Ascending aorta (tissue), 2 donors: ENCODE measurements at regions of chr1 and their contacts with region 1.

Region 1: GRCh38 chr1:117605774-117606648 is at the start of gene TENT5C:
- DNase-seq: peak; percentile 94 to 99
- H3K4me3 ChIP-seq: peak within 1 kb of the TSS; percentile 85 to 88
- H3K27ac ChIP-seq: peak within 1 kb of the TSS; percentile 83 to 90
- H3K4me1 ChIP-seq: peaks cover 0 to 9% of the 10 kb centered on the region in 2 donors
- H3K27me3 ChIP-seq: no peaks in the 10 kb centered on the region
- CTCF ChIP-seq: no peak
- total RNA-seq, gene TENT5C: 0.32 TPM

Region 2: GRCh38 chr1:116372587-116373444 is 1233.2 kb before region 1 on chr1 and contains the start of gene ATP1A1:
- intact Hi-C with region 1: loop called (anchors 5 kb)
- DNase-seq: peak; percentile 94 to 98
- H3K4me3 ChIP-seq: peak within 1 kb of the TSS; percentile 78 to 81
- H3K27ac ChIP-seq: peak within 1 kb of the TSS; percentile 95 to 96
- H3K4me1 ChIP-seq: peaks cover 17 to 36% of the 10 kb centered on the region in 2 donors
- H3K27me3 ChIP-seq: no peaks in the 10 kb centered on the region
- CTCF ChIP-seq: no peak
- total RNA-seq, gene ATP1A1: 255 TPM

Region 3: DNA sequence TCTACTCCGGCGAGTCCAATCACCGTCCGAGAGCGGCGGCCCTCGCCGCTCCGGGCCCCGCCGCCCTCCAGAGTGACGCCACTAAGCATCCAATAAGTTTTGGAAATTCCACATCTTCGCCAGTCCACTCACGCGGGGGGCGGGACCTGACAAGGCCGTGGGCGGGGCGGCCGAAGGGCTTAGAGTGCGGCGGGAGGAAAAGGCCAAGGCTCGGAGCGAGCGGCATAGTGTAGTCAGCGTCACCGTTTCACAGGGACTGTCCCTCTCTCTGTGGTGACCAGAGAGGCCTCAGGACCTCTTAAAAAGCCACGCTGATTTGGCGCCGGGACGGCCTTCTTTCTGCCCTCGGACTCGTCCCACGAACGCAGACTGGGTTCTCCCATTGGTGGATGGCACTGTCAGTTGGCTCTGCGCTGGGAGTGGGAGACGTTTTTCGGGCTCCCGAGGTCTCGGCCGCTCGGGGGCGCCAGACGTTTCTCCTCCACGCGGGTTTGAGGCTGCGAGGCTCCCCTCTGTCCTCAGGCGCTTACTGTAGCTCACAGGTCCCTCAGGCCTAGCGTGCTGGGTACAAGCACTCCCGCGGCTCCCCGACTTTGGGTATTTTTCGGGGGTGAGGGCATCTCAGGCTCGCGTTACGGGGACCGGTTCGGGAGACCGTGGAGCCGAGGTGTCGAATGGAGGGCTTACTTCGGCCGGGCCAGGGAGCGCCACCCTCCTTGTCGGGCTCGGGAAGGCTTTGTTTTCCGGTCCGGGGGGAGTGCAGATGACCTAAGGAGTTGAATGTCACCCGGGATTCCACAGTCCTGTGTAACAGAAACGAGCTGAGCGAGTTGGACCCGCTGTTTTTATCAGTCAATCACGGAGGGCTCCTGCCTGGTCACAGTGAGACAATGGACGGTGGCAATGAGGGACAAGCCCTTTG is 484.0 kb before region 1 on chr1:
- intact Hi-C with region 1: loop called (anchors 10 kb)
- DNase-seq: peak; percentile 86 to 99
- H3K4me3 ChIP-seq: peak overlapping the region; percentile 73 to 90
- H3K27ac ChIP-seq: peak overlapping the region; percentile 86 to 88
- H3K4me1 ChIP-seq: peaks cover 3 to 5% of the 10 kb centered on the region in 2 donors
- H3K27me3 ChIP-seq: no peaks in the 10 kb centered on the region
- CTCF ChIP-seq: peak; percentile 66 to 86 (median 80)

Region 4: DNA sequence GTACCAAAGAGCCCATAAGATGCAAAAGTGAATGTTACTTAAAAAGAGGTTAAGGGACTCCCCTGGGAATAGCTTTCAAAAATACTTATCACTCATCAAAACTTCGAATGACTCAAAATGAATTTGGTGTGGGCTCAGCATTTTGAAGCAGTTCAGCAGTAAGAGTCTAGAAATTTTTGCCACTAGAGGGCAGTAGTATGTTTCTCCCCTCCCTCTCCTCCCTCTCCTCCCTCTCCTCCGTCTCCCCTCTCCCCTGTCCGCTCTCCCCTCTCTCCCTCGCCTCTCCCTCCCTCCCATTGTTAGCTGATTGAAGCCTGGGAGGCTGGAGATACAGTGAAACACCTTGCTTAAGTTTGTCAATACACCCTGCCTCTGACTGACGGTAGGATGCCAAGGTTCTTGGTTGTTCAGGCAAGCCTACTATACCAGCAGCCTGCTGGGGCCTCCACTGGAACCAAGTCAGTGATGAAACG is 71.0 kb before region 1 on chr1:
- intact Hi-C with region 1: loop called (anchors 5 kb)
- DNase-seq: no peak
- H3K4me3 ChIP-seq: no peak overlapping the region
- H3K27ac ChIP-seq: no peak overlapping the region
- H3K4me1 ChIP-seq: no peaks in the 10 kb centered on the region
- H3K27me3 ChIP-seq: no peaks in the 10 kb centered on the region
- CTCF ChIP-seq: peak; percentile 55 to 76 (median 57)

Region 5: GRCh38 chr1:117695796-117696490 is 89.9 kb after region 1 on chr1:
- intact Hi-C with region 1: loop called (anchors 1 kb)
- DNase-seq: peak in 1 of 2 donors; percentile 88
- H3K4me3 ChIP-seq: peak overlapping the region in 1 of 2 donors; percentile 52
- H3K27ac ChIP-seq: peak overlapping the region; percentile 88
- H3K4me1 ChIP-seq: peaks cover 12 to 35% of the 10 kb centered on the region in 2 donors
- H3K27me3 ChIP-seq: no peaks in the 10 kb centered on the region
- CTCF ChIP-seq: no peak

Region 6: GRCh38 chr1:117821782-117822447 is 215.9 kb after region 1 on chr1:
- intact Hi-C with region 1: loop called (anchors 5 kb)
- DNase-seq: no peak
- H3K4me3 ChIP-seq: no peak overlapping the region
- H3K27ac ChIP-seq: peak overlapping the region; percentile 53 to 74
- H3K4me1 ChIP-seq: peaks cover 15 to 44% of the 10 kb centered on the region in 2 donors
- H3K27me3 ChIP-seq: no peaks in the 10 kb centered on the region
- CTCF ChIP-seq: no peak

Region 7: GRCh38 chr1:117857434-117857833 is 251.4 kb after region 1 on chr1:
- intact Hi-C with region 1: no loop called
- DNase-seq: no peak
- H3K4me3 ChIP-seq: no peak overlapping the region
- H3K27ac ChIP-seq: no peak overlapping the region
- H3K4me1 ChIP-seq: no peaks in the 10 kb centered on the region
- H3K27me3 ChIP-seq: no peaks in the 10 kb centered on the region
- CTCF ChIP-seq: no peak

Region 8: GRCh38 chr1:117929173-117929989 is 323.4 kb after region 1 on chr1 and contains the starts of genes GDAP2 and WDR3:
- intact Hi-C with region 1: loop called (anchors 5 kb)
- DNase-seq: peak; percentile 83 to 98
- H3K4me3 ChIP-seq: peak within 1 kb of the TSS; percentile 82 to 91
- H3K27ac ChIP-seq: peak within 1 kb of the TSS; percentile 86 to 95
- H3K4me1 ChIP-seq: peaks cover 6 to 16% of the 10 kb centered on the region in 2 donors
- H3K27me3 ChIP-seq: no peaks in the 10 kb centered on the region
- CTCF ChIP-seq: no peak
- total RNA-seq, gene GDAP2: 9.5 TPM
- total RNA-seq, gene WDR3: 4.3 TPM